PC-9 (cell line): ENCODE measurements at regions of chr10 and their contacts with region 1.

Region 1: DNA sequence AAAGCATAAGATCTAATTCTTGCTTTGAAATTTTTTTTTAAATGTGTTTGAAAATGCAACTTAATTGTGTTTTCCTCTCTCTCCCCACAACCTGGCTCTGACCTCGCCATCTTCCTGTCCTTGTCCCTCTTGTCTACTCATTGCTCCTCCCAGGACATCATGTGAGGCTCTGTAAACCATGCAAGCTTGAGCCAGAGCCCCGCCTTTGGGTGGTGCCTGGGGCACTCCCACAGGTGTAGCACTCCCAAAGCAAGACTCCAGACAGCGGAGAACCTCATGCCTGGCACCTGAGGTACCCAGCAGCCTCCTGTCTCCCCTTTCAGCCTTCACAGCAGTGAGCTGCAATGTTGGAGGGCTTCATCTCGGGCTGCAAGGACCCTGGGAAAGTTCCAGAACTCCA is 9.8 kb upstream of the CDHR1 start:
- DNase-seq: no peak
- H3K4me3 ChIP-seq: no peak overlapping the region
- H3K27ac ChIP-seq: no peak overlapping the region
- H3K4me1 ChIP-seq: no peaks in the 10 kb centered on the region
- H3K27me3 ChIP-seq: peaks cover 74% of the 10 kb centered on the region
- CTCF ChIP-seq: no peak

Region 2: DNA sequence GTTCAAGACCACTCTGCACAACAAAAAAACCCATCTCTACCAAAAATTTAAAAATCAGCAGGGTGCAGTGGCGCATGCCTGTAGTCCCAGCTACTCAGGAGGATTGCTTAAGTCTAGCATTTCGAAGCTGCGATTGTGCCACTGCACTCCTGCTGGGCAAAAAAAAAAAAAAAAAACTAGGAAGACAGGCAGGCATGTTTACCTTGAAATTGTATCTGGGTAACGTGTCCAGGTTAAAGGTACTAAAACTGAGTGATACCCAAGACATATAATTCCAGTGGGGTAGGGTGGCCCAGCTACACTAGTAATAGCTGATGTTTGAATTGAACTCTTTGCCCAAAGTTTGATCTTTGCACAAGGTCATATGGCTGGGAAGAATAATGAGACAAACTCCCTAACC is 29.0 kb before region 1 on chr10:
- CTCF ChIA-PET with region 1: no interaction called
- POLR2A ChIA-PET with region 1: interaction called, 16 read pairs
- intact Hi-C with region 1: no loop called
- DNase-seq: no peak
- H3K4me3 ChIP-seq: no peak overlapping the region
- H3K27ac ChIP-seq: no peak overlapping the region
- H3K4me1 ChIP-seq: no peaks in the 10 kb centered on the region
- H3K27me3 ChIP-seq: no peaks in the 10 kb centered on the region
- CTCF ChIP-seq: no peak